Heart left ventricle (tissue), 16 donors: ENCODE measurements at regions of chr3 and their contacts with region 1.

Region 1: GRCh38 chr3:173568623-173569022 is 171.1 kb downstream of the NLGN1 start:
- DNase-seq: no peak
- ATAC-seq: no peak
- H3K4me3 ChIP-seq: no peak overlapping the region
- H3K27ac ChIP-seq: no peak overlapping the region
- H3K4me1 ChIP-seq: no peaks in the 10 kb centered on the region
- H3K27me3 ChIP-seq: no peaks in the 10 kb centered on the region
- CTCF ChIP-seq: no peak
- POLR2A ChIP-seq: no peak

Region 2: DNA sequence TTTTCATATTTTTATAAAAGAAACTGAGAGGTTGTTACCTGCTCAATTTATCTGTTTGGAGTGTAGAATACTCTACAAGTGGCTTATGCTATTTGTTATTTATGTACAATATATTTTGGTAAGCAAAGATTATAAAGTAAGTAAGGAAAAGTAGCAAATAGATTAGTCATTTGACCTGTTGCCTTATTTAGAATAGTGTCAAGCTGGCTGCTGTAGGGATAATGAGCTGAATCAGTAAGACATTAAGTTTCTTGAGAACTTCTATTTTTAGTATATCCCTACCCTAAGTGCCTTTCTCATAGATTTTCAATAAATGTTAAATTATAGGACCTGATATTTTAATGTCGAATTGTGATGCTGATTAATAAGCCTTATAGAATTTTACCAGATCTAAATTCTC is 780.9 kb before region 1 on chr3:
- intact Hi-C with region 1: loop called in 1 of 10 experiments (anchors 5 kb)
- DNase-seq: no peak
- ATAC-seq: no peak
- H3K4me3 ChIP-seq: no peak overlapping the region
- H3K27ac ChIP-seq: no peak overlapping the region
- H3K4me1 ChIP-seq: no peaks in the 10 kb centered on the region
- H3K27me3 ChIP-seq: no peaks in the 10 kb centered on the region
- CTCF ChIP-seq: no peak
- POLR2A ChIP-seq: no peak

Region 3: DNA sequence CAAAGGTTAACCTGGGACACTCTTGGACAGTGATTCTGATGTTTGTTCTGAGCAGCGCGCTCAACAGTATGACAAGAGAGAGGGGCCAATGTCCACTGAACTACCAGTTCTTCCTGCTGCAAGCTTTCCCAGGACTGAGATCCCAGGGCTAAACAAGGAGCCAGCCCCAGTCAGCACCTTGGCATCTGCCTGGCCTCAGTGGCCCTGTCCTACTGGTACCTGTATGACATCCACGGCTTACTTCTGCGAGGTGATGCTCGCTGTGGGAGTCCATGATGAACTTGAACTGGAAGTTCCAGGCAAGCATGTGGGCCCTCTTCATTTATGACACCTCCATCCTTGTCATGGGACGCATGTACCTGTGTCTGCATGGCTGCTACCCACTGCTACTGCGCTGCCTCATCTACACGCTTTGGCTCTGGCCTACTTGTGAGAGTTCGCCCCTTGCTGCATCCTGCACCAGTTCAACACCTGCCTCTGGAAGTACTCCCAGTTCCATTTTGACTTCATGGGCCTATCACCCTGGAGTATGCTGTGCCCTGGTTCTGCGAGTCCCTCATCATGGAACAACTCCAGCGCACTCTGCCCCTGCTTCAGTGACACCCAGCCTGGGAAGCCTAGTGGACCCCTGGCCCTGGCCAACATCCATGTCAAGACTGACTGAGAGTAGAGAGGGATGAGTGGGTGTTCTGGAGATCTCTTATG is 75.6 kb after region 1 on chr3:
- intact Hi-C with region 1: no loop called
- DNase-seq: no peak
- ATAC-seq: peak in 1 of 4 donors; percentile 29
- H3K4me3 ChIP-seq: no peak overlapping the region
- H3K27ac ChIP-seq: no peak overlapping the region
- H3K4me1 ChIP-seq: no peaks in the 10 kb centered on the region
- H3K27me3 ChIP-seq: no peaks in the 10 kb centered on the region
- CTCF ChIP-seq: no peak
- POLR2A ChIP-seq: no peak

Region 4: DNA sequence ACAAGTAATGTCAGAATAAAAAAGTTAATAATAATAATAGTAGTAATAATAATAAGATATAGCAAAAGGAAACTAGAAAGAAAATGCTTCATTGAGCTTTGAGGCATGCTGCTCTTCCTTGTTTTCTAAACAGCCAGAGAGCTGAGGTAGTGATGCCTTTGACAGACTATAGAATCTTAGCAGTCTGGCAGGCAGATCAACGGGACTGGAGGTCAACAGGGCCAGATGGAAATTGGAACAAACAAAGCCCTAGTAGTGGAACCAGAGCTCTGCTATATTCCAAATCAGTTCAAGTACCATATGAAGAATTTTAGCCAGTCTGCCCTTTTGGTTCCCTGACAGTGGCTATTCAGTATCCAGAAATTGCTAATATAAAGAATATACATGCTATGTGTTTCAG is 107.5 kb after region 1 on chr3:
- intact Hi-C with region 1: no loop called
- DNase-seq: no peak
- ATAC-seq: peak in 1 of 4 donors; percentile 20
- H3K4me3 ChIP-seq: no peak overlapping the region
- H3K27ac ChIP-seq: no peak overlapping the region
- H3K4me1 ChIP-seq: no peaks in the 10 kb centered on the region
- H3K27me3 ChIP-seq: no peaks in the 10 kb centered on the region
- CTCF ChIP-seq: no peak
- POLR2A ChIP-seq: no peak